HCT116 (cell line): ENCODE measurements at regions of chr6 and their contacts with region 1.

Region 1: GRCh38 chr6:170529839-170530469 is 23.2 kb downstream of the PSMB1 start:
- DNase-seq: peak; percentile 52
- ATAC-seq: peak; percentile 92
- H3K4me3 ChIP-seq: no peak overlapping the region
- H3K27ac ChIP-seq: no peak overlapping the region
- H3K4me1 ChIP-seq: no peaks in the 10 kb centered on the region
- H3K27me3 ChIP-seq: no peaks in the 10 kb centered on the region
- CTCF ChIP-seq: peak; percentile 84 to 92 (median 91)
- POLR2A ChIP-seq: no peak
- RAD21 ChIP-seq: peak; percentile 94

Region 2: GRCh38 chr6:168895102-168895812 is 1634.7 kb before region 1 on chr6:
- CTCF ChIA-PET with region 1: no interaction called
- POLR2A ChIA-PET with region 1: no interaction called
- RAD21 ChIA-PET with region 1: no interaction called
- intact Hi-C with region 1: loop called (anchors 1 kb)
- DNase-seq: peak; percentile 43
- ATAC-seq: peak; percentile 96
- H3K4me3 ChIP-seq: 0 out of 4 replicates have a peak overlapping the region, but pooled peaks have one; percentile 7 to 29
- H3K27ac ChIP-seq: no peak overlapping the region
- H3K4me1 ChIP-seq: peaks cover 0 to 12% of the 10 kb centered on the region in 2 experiments; a peak in 2 of 4 replicates
- H3K27me3 ChIP-seq: no peaks in the 10 kb centered on the region
- CTCF ChIP-seq: peak; percentile 89 to 93 (median 92)
- POLR2A ChIP-seq: no peak
- RAD21 ChIP-seq: peak; percentile 94

Region 3: GRCh38 chr6:169701954-169702839 is 827.8 kb before region 1 on chr6 and contains the starts of genes C6orf120 and WDR27:
- CTCF ChIA-PET with region 1: no interaction called
- POLR2A ChIA-PET with region 1: no interaction called
- RAD21 ChIA-PET with region 1: no interaction called
- intact Hi-C with region 1: loop called (anchors 10 kb)
- DNase-seq: peak; percentile 91
- ATAC-seq: peak; percentile 90
- H3K4me3 ChIP-seq: peak within 1 kb of the TSS; percentile 94 to 98
- H3K27ac ChIP-seq: peak within 1 kb of the TSS; percentile 99
- H3K4me1 ChIP-seq: peaks cover 19 to 20% of the 10 kb centered on the region in 2 experiments
- H3K27me3 ChIP-seq: no peaks in the 10 kb centered on the region
- CTCF ChIP-seq: no peak
- POLR2A ChIP-seq: peak; percentile 52
- RAD21 ChIP-seq: no peak
- total RNA-seq, gene C6orf120: 20.6 TPM
- total RNA-seq, gene WDR27: 60.6 TPM

Region 4: GRCh38 chr6:169789982-169790927 is 739.7 kb before region 1 on chr6:
- CTCF ChIA-PET with region 1: interaction called, 14 read pairs
- POLR2A ChIA-PET with region 1: no interaction called
- RAD21 ChIA-PET with region 1: no interaction called
- intact Hi-C with region 1: loop called (anchors 1 kb)
- DNase-seq: peak; percentile 35
- ATAC-seq: peak; percentile 96
- H3K4me3 ChIP-seq: peak overlapping the region; percentile 41 to 58
- H3K27ac ChIP-seq: no peak overlapping the region
- H3K4me1 ChIP-seq: peaks cover 0 to 16% of the 10 kb centered on the region in 2 experiments; a peak in 3 of 4 replicates
- H3K27me3 ChIP-seq: no peaks in the 10 kb centered on the region; the same call in 1 of the 2 replicates
- CTCF ChIP-seq: peak; percentile 94 to 97 (median 96)
- POLR2A ChIP-seq: no peak
- RAD21 ChIP-seq: peak; percentile 97

Region 5: DNA sequence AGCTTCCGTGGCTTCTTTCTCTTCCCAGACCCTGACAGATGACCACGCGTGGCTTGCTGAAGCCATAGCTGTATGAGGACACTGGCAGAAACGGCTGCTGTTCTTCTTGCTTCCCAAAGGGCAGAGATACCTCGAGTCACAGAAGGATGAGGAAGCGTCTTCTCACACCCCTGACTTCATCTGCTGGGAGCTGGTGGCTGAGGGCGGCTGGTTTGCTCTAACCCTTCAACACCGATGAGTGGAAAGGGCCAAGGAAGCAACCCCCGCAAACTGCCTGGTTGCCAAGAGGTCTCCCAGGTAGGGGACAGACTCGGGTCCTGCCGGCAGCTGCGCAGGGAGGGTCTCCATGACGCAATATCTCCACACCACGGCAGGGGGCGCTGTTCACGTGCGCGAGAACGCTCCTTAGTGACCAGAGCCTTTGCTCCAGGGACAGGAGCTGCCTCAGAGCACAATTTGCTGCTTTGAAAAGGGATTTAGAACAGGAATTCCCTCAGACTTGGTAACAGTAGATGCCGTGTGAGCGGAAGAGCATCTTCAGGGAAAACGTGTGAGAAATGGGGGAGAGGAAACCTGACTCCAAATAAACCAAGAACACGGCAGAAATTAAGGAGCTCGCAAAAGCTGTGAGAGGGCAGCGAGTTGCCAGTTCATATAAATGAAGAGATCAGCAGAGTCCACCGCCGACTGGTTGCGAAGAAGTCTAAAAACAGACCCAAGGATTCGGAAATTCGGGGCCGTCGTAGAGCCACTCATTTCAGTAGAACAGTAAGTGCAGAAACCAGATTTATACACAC is 698.3 kb before region 1 on chr6:
- CTCF ChIA-PET with region 1: interaction called, 8 read pairs
- POLR2A ChIA-PET with region 1: no interaction called
- RAD21 ChIA-PET with region 1: interaction called in 1 of 2 experiments, 4 read pairs
- intact Hi-C with region 1: loop called (anchors 1 kb)
- DNase-seq: peak; percentile 38
- ATAC-seq: peak; percentile 98
- H3K4me3 ChIP-seq: no peak overlapping the region
- H3K27ac ChIP-seq: no peak overlapping the region
- H3K4me1 ChIP-seq: peaks cover 0 to 6% of the 10 kb centered on the region in 2 experiments; a peak in 1 of 4 replicates
- H3K27me3 ChIP-seq: peaks cover 5% of the 10 kb centered on the region; the same call in 1 of the 2 replicates
- CTCF ChIP-seq: peak; percentile 84 to 97 (median 89)
- POLR2A ChIP-seq: no peak
- RAD21 ChIP-seq: peak; percentile 90

Region 6: GRCh38 chr6:170295510-170296422 is 234.2 kb before region 1 on chr6:
- CTCF ChIA-PET with region 1: no interaction called
- POLR2A ChIA-PET with region 1: no interaction called
- RAD21 ChIA-PET with region 1: no interaction called
- intact Hi-C with region 1: loop called (anchors 10 kb)
- DNase-seq: no peak
- ATAC-seq: peak; percentile 73
- H3K4me3 ChIP-seq: peak overlapping the region; percentile 35 to 59
- H3K27ac ChIP-seq: peak overlapping the region; percentile 22; the same call in 1 of the 2 replicates
- H3K4me1 ChIP-seq: peaks cover 4 to 14% of the 10 kb centered on the region in 2 experiments; a peak in 2 of 4 replicates
- H3K27me3 ChIP-seq: peaks cover 4% of the 10 kb centered on the region; the same call in 1 of the 2 replicates
- CTCF ChIP-seq: no peak
- POLR2A ChIP-seq: no peak
- RAD21 ChIP-seq: no peak